Activated T-helper 2 cell treated with anti-CD3 and anti-CD28 coated beads, Interferon-gamma antibody, Interleukin-2, Interleukin-4, amounts not matched to agents 10 μg/mL and 5 μg/mL and 100 μg/mL, durations not matched to agents 14 hours and 24 hours and 36 hours (primary cell): ENCODE measurements at regions of chr3 and their contacts with region 1.

Region 1: DNA sequence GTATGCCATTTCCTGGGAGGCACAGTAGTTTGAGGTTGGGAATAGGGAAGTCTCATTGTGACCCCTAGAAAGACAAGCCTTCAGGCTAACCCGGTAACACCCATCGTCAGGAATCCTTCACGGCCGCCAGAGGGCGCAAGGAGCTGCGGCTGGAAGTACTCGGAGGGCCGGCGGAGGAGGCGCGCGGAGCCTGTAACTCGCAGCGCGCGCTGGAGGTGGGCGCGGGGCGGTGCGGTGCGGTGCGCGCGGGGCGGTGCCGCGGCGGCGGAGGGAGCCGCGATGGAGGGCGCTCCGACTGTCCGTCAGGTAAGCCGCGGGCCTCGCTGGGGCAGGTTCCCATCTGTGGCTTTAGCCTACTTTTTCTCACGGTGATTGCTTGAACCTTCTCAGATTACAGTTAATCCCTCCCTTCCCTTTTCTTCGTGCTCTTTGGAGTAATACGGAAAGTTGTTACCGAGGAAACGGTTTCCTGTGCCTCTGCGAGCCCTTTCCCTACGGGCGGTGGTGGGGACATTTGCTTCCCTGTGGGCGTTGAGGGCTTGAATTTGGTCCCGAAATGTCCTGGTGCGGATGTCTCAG is at the start of gene GRAMD1C:
- DNase-seq: peak; percentile 77
- H3K4me3 Mint-ChIP-seq: peak within 1 kb of the TSS; percentile 76
- H3K27ac Mint-ChIP-seq: no peak within 1 kb of the TSS
- H3K4me1 Mint-ChIP-seq: peaks cover 8% of the 10 kb centered on the region
- H3K27me3 Mint-ChIP-seq: peaks cover 5% of the 10 kb centered on the region
- total RNA-seq, gene GRAMD1C: 0.37 and 0.87 TPM in 2 replicates

Region 2: GRCh38 chr3:113736548-113737089 is 102.1 kb before region 1 on chr3:
- intact Hi-C with region 1: loop called (anchors 1 kb)
- DNase-seq: no peak
- H3K4me3 Mint-ChIP-seq: no peak overlapping the region
- H3K27ac Mint-ChIP-seq: no peak overlapping the region
- H3K4me1 Mint-ChIP-seq: peaks cover 47% of the 10 kb centered on the region
- H3K27me3 Mint-ChIP-seq: no peaks in the 10 kb centered on the region

Region 3: DNA sequence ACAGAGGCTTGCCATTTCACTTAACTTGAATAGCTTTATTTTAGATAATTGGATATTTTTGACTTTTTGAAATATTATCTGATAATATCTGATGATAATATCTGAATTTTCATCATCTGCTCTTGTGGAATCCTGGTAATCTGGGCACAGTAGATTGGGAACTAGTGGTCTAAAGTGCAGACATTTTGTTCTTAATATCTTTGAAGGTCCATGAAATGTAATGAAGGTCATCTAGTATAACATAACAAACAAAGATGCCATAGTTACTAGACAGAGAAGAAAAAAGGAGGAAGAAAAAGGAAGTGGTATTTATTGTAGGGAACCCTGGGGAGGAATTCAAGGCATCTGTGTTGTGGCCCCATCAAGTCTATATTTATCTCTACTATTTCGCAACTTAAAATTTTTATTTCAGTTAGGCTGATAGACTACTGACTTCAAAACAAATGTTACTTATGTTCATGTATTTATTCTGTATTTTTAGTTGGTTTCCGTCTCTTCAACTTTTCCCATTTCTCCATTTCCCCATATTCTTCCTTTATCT is 60.1 kb after region 1 on chr3:
- intact Hi-C with region 1: no loop called
- DNase-seq: no peak
- H3K4me3 Mint-ChIP-seq: no peak overlapping the region
- H3K27ac Mint-ChIP-seq: no peak overlapping the region
- H3K4me1 Mint-ChIP-seq: peaks cover 2% of the 10 kb centered on the region
- H3K27me3 Mint-ChIP-seq: peaks cover 13% of the 10 kb centered on the region

Region 4: GRCh38 chr3:113912552-113913236 is 74.0 kb after region 1 on chr3:
- intact Hi-C with region 1: loop called (anchors 1 kb)
- DNase-seq: peak; percentile 13
- H3K4me3 Mint-ChIP-seq: peak overlapping the region; percentile 52
- H3K27ac Mint-ChIP-seq: no peak overlapping the region
- H3K4me1 Mint-ChIP-seq: peaks cover 5% of the 10 kb centered on the region
- H3K27me3 Mint-ChIP-seq: peaks cover 10% of the 10 kb centered on the region